Activated CD8-positive, alpha-beta T cell treated with anti-CD3 and anti-CD28 coated beads, Interleukin-2, amount 10 ng/mL, durations not matched to agents 7 days and 5 days (primary cell): ENCODE measurements at regions of chr11 and their contacts with region 1.

Region 1: DNA sequence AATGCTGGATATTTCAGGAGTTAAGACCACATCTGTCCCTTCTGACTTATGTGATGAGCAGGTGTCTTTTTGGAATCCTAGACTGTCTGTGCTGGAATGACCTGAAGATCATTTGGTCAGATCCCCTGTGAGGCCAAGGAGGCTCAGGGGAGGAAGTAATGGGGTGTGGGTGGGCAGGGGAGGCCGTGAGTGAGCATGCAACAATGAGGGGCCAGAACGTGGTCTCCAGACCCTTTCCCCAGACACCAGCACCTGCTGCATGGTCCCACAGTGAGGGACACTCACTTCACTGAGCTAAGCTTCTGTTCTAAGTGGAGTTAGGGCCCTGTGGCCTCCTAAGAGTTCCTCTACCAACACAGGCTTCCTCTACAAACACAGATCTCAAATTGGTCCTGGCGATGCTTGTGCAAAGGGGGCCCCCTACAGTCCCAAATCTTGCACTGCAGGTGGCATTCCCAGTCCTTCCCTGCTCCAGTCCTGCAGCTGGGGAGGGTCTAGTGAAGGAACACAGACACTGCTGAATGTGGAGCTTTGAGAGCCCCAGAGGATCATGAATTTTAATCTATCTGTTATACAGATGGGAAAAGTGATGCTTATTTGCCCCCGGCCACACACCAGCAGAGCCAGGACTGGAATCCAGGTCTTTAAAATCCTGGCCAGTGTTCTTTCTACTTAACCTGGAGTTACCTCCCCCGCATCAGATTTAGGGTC is 7.4 kb downstream of the USP2 start:
- DNase-seq: peak; percentile 55
- ATAC-seq: peak; percentile 45
- H3K4me3 Mint-ChIP-seq: no peak overlapping the region
- H3K27ac Mint-ChIP-seq: no peak overlapping the region
- H3K4me1 Mint-ChIP-seq: peaks cover 16% of the 10 kb centered on the region
- H3K27me3 Mint-ChIP-seq: peaks cover 9% of the 10 kb centered on the region

Region 2: GRCh38 chr11:119175493-119176077 is 198.5 kb before region 1 on chr11:
- CTCF ChIA-PET with region 1: no interaction called
- POLR2A ChIA-PET with region 1: no interaction called
- DNase-seq: no peak
- ATAC-seq: no peak
- H3K4me3 Mint-ChIP-seq: no peak overlapping the region
- H3K27ac Mint-ChIP-seq: no peak overlapping the region
- H3K4me1 Mint-ChIP-seq: peaks cover 24% of the 10 kb centered on the region
- H3K27me3 Mint-ChIP-seq: no peaks in the 10 kb centered on the region

Region 3: DNA sequence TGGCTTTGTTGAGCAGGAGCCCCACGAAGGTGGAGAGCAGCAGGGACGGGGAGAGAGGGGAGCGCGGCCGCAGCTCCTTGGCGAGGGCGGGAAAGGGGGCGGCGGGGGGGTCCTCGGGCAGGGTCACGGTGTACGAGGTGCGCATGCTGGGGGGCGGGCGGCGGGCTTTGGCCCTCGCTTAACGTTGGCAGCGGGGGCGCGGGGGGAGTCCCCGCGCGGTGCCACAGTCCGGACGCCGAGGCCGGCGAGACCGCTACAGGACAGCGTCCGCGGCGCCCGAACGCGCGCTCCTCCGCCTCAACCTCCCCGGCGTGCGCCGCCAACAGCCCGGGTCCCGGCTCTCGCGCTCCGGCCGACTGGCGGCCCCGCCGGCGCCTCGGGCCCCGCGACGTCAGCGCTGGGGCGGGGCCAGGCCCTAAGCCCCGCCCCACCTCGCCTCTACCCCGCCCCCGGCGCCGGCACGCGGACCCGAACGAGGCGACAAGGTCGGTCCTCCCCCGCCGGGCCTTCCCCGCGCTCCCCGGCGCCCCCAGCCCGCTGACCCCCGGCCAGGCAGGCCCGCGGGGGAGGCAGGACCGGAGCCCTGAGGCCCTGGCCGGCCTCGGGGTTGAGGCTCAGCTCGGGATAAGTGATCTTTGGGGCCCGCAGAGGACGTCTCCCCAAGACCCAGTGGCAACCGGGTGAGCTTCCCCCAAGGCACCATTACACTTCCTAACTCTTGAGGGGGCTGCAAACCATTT is 10.1 kb before region 1 on chr11:
- CTCF ChIA-PET with region 1: interaction called, 10 read pairs
- POLR2A ChIA-PET with region 1: no interaction called
- DNase-seq: peak; percentile 51
- ATAC-seq: peak; percentile 91
- H3K4me3 Mint-ChIP-seq: peak overlapping the region; percentile 52
- H3K27ac Mint-ChIP-seq: no peak overlapping the region
- H3K4me1 Mint-ChIP-seq: peaks cover 9% of the 10 kb centered on the region
- H3K27me3 Mint-ChIP-seq: peaks cover 41% of the 10 kb centered on the region

Region 4: GRCh38 chr11:119474682-119475596 is 100.9 kb after region 1 on chr11:
- CTCF ChIA-PET with region 1: interaction called, 11 read pairs
- POLR2A ChIA-PET with region 1: no interaction called
- DNase-seq: peak; percentile 63
- ATAC-seq: peak; percentile 59
- H3K4me3 Mint-ChIP-seq: no peak overlapping the region
- H3K27ac Mint-ChIP-seq: no peak overlapping the region
- H3K4me1 Mint-ChIP-seq: no peaks in the 10 kb centered on the region
- H3K27me3 Mint-ChIP-seq: peaks cover 4% of the 10 kb centered on the region